Activated CD8-positive, alpha-beta T cell treated with anti-CD3 and anti-CD28 coated beads for 36 hours (primary cell): ENCODE measurements at regions of chr15 and their contacts with region 1.

Region 1: GRCh38 chr15:99371180-99372103 is 120.2 kb downstream of the LRRC28 start:
- DNase-seq: peak; percentile 4
- ATAC-seq: peak; percentile 84
- H3K4me3 Mint-ChIP-seq: no peak overlapping the region
- H3K27ac Mint-ChIP-seq: peak overlapping the region; percentile 74
- H3K4me1 Mint-ChIP-seq: peaks cover 22% of the 10 kb centered on the region
- H3K27me3 Mint-ChIP-seq: no peaks in the 10 kb centered on the region
- CTCF ChIP-seq: no peak

Region 2: GRCh38 chr15:99385865-99386264 is 14.4 kb after region 1 on chr15:
- CTCF ChIA-PET with region 1: interaction called, 11 read pairs
- POLR2A ChIA-PET with region 1: no interaction called
- intact Hi-C with region 1: no loop called
- DNase-seq: no peak
- ATAC-seq: no peak
- H3K4me3 Mint-ChIP-seq: no peak overlapping the region
- H3K27ac Mint-ChIP-seq: no peak overlapping the region
- H3K4me1 Mint-ChIP-seq: peaks cover 10% of the 10 kb centered on the region
- H3K27me3 Mint-ChIP-seq: no peaks in the 10 kb centered on the region
- CTCF ChIP-seq: no peak

Region 3: GRCh38 chr15:99433757-99434450 is 62.5 kb after region 1 on chr15:
- CTCF ChIA-PET with region 1: no interaction called
- POLR2A ChIA-PET with region 1: no interaction called
- intact Hi-C with region 1: no loop called
- DNase-seq: no peak
- ATAC-seq: no peak
- H3K4me3 Mint-ChIP-seq: no peak overlapping the region
- H3K27ac Mint-ChIP-seq: no peak overlapping the region
- H3K4me1 Mint-ChIP-seq: peaks cover 60% of the 10 kb centered on the region
- H3K27me3 Mint-ChIP-seq: no peaks in the 10 kb centered on the region
- CTCF ChIP-seq: no peak